Prostate gland (tissue), 2 donors: ENCODE measurements at regions of chr13 and their contacts with region 1.

Region 1: GRCh38 chr13:40149611-40150274 is 494.3 kb downstream of the COG6 start:
- DNase-seq: peak; percentile 19
- H3K4me3 ChIP-seq: no peak overlapping the region
- H3K27ac ChIP-seq: peak overlapping the region; percentile 45 to 50
- H3K4me1 ChIP-seq: no peaks in the 10 kb centered on the region
- H3K27me3 ChIP-seq: no peaks in the 10 kb centered on the region
- CTCF ChIP-seq: no peak
- POLR2A ChIP-seq: no peak

Region 2: GRCh38 chr13:40175639-40176038 is 25.9 kb after region 1 on chr13:
- intact Hi-C with region 1: loop called (anchors 2 kb)
- DNase-seq: no peak
- H3K4me3 ChIP-seq: no peak overlapping the region
- H3K27ac ChIP-seq: no peak overlapping the region
- H3K4me1 ChIP-seq: no peaks in the 10 kb centered on the region
- H3K27me3 ChIP-seq: no peaks in the 10 kb centered on the region
- CTCF ChIP-seq: no peak
- POLR2A ChIP-seq: no peak

Region 3: DNA sequence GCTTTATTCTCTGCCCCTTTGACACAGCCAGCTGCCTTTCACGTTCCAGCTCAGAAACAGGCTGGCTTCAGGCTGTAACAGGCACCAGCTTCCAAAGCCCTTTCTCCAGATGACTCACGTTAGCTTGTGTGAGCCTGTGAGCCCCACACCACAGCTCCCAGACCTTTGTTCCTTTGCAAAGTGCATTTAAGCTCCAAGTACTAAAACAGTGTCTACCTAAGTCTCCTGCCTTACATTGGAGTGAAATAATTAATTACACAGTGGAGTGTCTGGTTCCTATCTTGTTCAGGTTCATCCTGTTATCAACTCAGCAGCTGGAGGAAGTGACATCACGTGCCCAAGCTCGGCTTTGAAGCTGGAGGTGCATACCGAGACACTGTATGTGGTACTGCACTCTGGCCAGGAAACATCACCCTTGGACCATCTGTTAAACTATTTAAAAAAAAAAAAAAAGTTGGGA is 40.9 kb after region 1 on chr13:
- intact Hi-C with region 1: loop called (anchors 5 kb)
- DNase-seq: peak; percentile 30
- H3K4me3 ChIP-seq: no peak overlapping the region
- H3K27ac ChIP-seq: peak overlapping the region; percentile 42 to 50
- H3K4me1 ChIP-seq: no peaks in the 10 kb centered on the region
- H3K27me3 ChIP-seq: no peaks in the 10 kb centered on the region
- CTCF ChIP-seq: no peak
- POLR2A ChIP-seq: no peak

Region 4: DNA sequence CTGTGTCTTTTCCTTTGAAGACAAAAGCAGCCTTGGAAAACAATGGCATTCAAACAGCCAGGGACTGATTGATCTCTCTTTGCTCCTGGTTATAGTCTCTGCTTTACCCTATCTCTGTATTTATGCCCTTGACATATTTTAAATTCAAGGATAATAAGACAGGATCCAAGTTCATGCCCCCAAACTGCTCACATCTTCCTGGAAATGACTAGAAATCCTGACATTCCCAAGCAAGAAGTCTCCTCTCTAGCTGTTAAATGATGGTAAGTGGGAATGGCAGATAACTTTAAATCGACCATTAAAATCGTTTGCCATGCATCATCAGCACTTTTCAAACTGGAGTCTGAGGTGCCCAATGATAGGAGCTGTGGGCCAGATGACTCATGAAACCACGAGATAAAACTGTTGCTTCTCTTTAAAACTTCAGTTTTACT is 81.1 kb after region 1 on chr13:
- intact Hi-C with region 1: loop called (anchors 10 kb)
- DNase-seq: no peak
- H3K4me3 ChIP-seq: no peak overlapping the region
- H3K27ac ChIP-seq: peak overlapping the region in 1 of 2 donors; percentile 15
- H3K4me1 ChIP-seq: no peaks in the 10 kb centered on the region
- H3K27me3 ChIP-seq: no peaks in the 10 kb centered on the region
- CTCF ChIP-seq: no peak
- POLR2A ChIP-seq: no peak